ENCODE measurements at regions of chr19 and their contacts with region 1.

Region 1: GRCh38 chr19:56252699-56253422 is 19.7 kb upstream of the EDDM13 start:
- DNase-seq: peak; percentile 53
- ATAC-seq: peak; percentile 86
- H3K4me3 Mint-ChIP-seq: no peak overlapping the region
- H3K27ac Mint-ChIP-seq: no peak overlapping the region
- H3K4me1 Mint-ChIP-seq: no peaks in the 10 kb centered on the region
- H3K27me3 Mint-ChIP-seq: no peaks in the 10 kb centered on the region
- CTCF ChIP-seq: no peak

Region 2: GRCh38 chr19:56066152-56067023 is 186.5 kb before region 1 on chr19:
- CTCF ChIA-PET with region 1: interaction called, 19 read pairs
- POLR2A ChIA-PET with region 1: no interaction called
- intact Hi-C with region 1: loop called (anchors 5 kb)
- DNase-seq: peak; percentile 61
- ATAC-seq: peak; percentile 69
- H3K4me3 Mint-ChIP-seq: peak overlapping the region; percentile 53
- H3K27ac Mint-ChIP-seq: no peak overlapping the region
- H3K4me1 Mint-ChIP-seq: peaks cover 12% of the 10 kb centered on the region
- H3K27me3 Mint-ChIP-seq: peaks cover 28% of the 10 kb centered on the region
- CTCF ChIP-seq: peak; percentile 34

Region 3: GRCh38 chr19:56266051-56266450 is 13.2 kb after region 1 on chr19:
- CTCF ChIA-PET with region 1: interaction called, 15 read pairs
- POLR2A ChIA-PET with region 1: no interaction called
- intact Hi-C with region 1: no loop called
- DNase-seq: no peak
- ATAC-seq: no peak
- H3K4me3 Mint-ChIP-seq: no peak overlapping the region
- H3K27ac Mint-ChIP-seq: no peak overlapping the region
- H3K4me1 Mint-ChIP-seq: no peaks in the 10 kb centered on the region
- H3K27me3 Mint-ChIP-seq: no peaks in the 10 kb centered on the region
- CTCF ChIP-seq: no peak

Region 4: GRCh38 chr19:56333505-56333904 is 80.6 kb after region 1 on chr19:
- CTCF ChIA-PET with region 1: interaction called, 134 read pairs
- POLR2A ChIA-PET with region 1: interaction called, 4 read pairs
- intact Hi-C with region 1: loop called (anchors 1 kb)
- DNase-seq: no peak
- ATAC-seq: peak; percentile 73
- H3K4me3 Mint-ChIP-seq: no peak overlapping the region
- H3K27ac Mint-ChIP-seq: no peak overlapping the region
- H3K4me1 Mint-ChIP-seq: no peaks in the 10 kb centered on the region
- H3K27me3 Mint-ChIP-seq: peaks cover 3% of the 10 kb centered on the region
- CTCF ChIP-seq: peak; percentile 36

Region 5: DNA sequence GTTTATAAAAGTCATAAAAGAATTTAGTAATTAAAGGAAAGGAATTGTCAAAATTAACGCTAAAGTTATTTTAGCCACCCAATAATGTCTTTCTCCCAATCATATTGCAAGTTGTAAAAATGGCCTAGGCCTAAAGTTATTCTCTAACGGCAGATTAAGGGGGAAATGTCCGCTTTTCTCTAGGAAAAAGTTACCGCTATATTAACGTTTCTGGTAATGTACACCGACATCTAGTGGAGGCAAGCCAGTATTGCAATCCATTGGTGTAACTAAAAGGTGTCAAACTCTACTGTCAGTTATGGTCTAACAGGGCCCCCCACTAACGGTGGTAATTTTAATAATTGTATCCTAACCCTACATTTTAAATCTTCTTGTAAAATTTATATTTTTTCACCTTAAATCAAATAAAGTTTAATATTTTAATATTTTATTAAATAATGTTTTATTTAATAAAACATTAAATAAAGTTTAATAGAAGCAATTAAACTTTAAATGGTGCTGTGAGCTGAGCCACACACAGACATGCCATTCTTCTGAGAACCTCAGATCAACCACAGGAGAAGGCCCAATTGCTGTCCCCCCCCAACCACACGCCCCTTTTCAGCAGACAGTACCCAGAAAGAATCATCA is 97.7 kb after region 1 on chr19:
- CTCF ChIA-PET with region 1: interaction called, 9 read pairs
- POLR2A ChIA-PET with region 1: no interaction called
- intact Hi-C with region 1: loop called (anchors 1 kb)
- DNase-seq: no peak
- ATAC-seq: no peak
- H3K4me3 Mint-ChIP-seq: no peak overlapping the region
- H3K27ac Mint-ChIP-seq: no peak overlapping the region
- H3K4me1 Mint-ChIP-seq: no peaks in the 10 kb centered on the region
- H3K27me3 Mint-ChIP-seq: no peaks in the 10 kb centered on the region
- CTCF ChIP-seq: no peak

Region 6: GRCh38 chr19:57103573-57104277 is 850.9 kb after region 1 on chr19:
- CTCF ChIA-PET with region 1: interaction called, 9 read pairs
- POLR2A ChIA-PET with region 1: no interaction called
- intact Hi-C with region 1: loop called (anchors 2 kb)
- DNase-seq: peak; percentile 27
- ATAC-seq: peak; percentile 82
- H3K4me3 Mint-ChIP-seq: peak overlapping the region; percentile 57
- H3K27ac Mint-ChIP-seq: peak overlapping the region; percentile 53
- H3K4me1 Mint-ChIP-seq: peaks cover 5% of the 10 kb centered on the region
- H3K27me3 Mint-ChIP-seq: peaks cover 11% of the 10 kb centered on the region
- CTCF ChIP-seq: no peak